MCF 10A (cell line): ENCODE measurements at regions of chr1 and their contacts with region 1.

Region 1: GRCh38 chr1:217660353-217661062 is 29.4 kb downstream of the SPATA17 start:
- DNase-seq: peak; percentile 97
- H3K4me3 Mint-ChIP-seq: no peak overlapping the region
- H3K27ac Mint-ChIP-seq: peak overlapping the region; percentile 52
- H3K4me1 Mint-ChIP-seq: peaks cover 25% of the 10 kb centered on the region
- H3K27me3 Mint-ChIP-seq: no peaks in the 10 kb centered on the region
- CTCF ChIP-seq: peak; percentile 70

Region 2: DNA sequence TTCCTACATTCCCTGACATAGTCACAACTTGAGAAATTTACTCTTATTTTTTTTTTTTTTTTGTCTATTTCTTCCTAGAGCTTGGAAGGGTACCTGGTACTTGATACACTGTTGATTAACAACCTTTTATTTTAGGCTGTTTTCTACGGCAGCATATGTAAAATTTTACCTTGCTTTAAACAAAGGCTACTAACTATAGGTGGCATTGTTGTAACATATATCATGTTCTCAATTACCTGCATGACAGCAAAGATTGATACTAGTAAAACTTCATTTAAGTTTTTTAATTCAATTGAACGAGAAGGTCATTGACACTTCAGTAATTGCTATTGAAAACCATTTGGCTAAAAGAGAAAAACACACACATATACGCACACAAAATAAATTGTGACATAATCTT is 699.0 kb before region 1 on chr1:
- CTCF ChIA-PET with region 1: interaction called, 5 read pairs
- POLR2A ChIA-PET with region 1: no interaction called
- intact Hi-C with region 1: loop called (anchors 1 kb)
- DNase-seq: no peak
- H3K4me3 Mint-ChIP-seq: no peak overlapping the region
- H3K27ac Mint-ChIP-seq: no peak overlapping the region
- H3K4me1 Mint-ChIP-seq: no peaks in the 10 kb centered on the region
- H3K27me3 Mint-ChIP-seq: no peaks in the 10 kb centered on the region
- CTCF ChIP-seq: peak; percentile 5

Region 3: DNA sequence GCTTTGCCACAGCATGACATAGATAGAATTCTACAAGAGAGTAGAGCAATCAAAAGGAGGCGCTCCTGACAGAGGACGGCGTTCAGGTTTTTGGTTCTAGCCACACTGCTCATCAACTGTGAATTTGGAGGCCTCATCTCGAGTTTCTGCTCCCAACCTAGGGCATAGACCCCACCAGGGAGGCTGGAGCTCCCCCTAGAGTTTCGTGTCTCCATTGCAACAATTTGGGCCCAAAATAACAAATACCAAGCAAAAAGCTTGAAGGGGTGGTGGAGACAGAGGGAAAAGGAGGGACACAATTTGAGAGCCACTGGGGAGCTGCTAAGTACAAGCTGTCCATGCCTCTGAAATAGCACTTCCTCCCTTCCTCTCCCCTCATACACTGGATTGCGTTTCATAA is 326.6 kb before region 1 on chr1:
- CTCF ChIA-PET with region 1: interaction called, 3 read pairs
- POLR2A ChIA-PET with region 1: no interaction called
- intact Hi-C with region 1: loop called (anchors 2 kb)
- DNase-seq: peak; percentile 79
- H3K4me3 Mint-ChIP-seq: no peak overlapping the region
- H3K27ac Mint-ChIP-seq: no peak overlapping the region
- H3K4me1 Mint-ChIP-seq: no peaks in the 10 kb centered on the region
- H3K27me3 Mint-ChIP-seq: peaks cover 5% of the 10 kb centered on the region
- CTCF ChIP-seq: peak; percentile 91

Region 4: GRCh38 chr1:217453816-217454215 is 206.7 kb before region 1 on chr1:
- CTCF ChIA-PET with region 1: no interaction called
- POLR2A ChIA-PET with region 1: no interaction called
- intact Hi-C with region 1: loop called (anchors 1 kb)
- DNase-seq: no peak
- H3K4me3 Mint-ChIP-seq: no peak overlapping the region
- H3K27ac Mint-ChIP-seq: no peak overlapping the region
- H3K4me1 Mint-ChIP-seq: no peaks in the 10 kb centered on the region
- H3K27me3 Mint-ChIP-seq: no peaks in the 10 kb centered on the region
- CTCF ChIP-seq: no peak

Region 5: GRCh38 chr1:217734973-217735372 is 74.5 kb after region 1 on chr1:
- CTCF ChIA-PET with region 1: interaction called, 3 read pairs
- POLR2A ChIA-PET with region 1: no interaction called
- intact Hi-C with region 1: loop called (anchors 2 kb)
- DNase-seq: peak; percentile 68
- H3K4me3 Mint-ChIP-seq: no peak overlapping the region
- H3K27ac Mint-ChIP-seq: no peak overlapping the region
- H3K4me1 Mint-ChIP-seq: peaks cover 27% of the 10 kb centered on the region
- H3K27me3 Mint-ChIP-seq: no peaks in the 10 kb centered on the region
- CTCF ChIP-seq: no peak

Region 6: GRCh38 chr1:218101409-218101808 is 440.9 kb after region 1 on chr1:
- CTCF ChIA-PET with region 1: no interaction called
- POLR2A ChIA-PET with region 1: no interaction called
- intact Hi-C with region 1: no loop called
- DNase-seq: no peak
- H3K4me3 Mint-ChIP-seq: no peak overlapping the region
- H3K27ac Mint-ChIP-seq: no peak overlapping the region
- H3K4me1 Mint-ChIP-seq: no peaks in the 10 kb centered on the region
- H3K27me3 Mint-ChIP-seq: peaks cover 49% of the 10 kb centered on the region
- CTCF ChIP-seq: no peak

Region 7: GRCh38 chr1:218171285-218171893 is 510.9 kb after region 1 on chr1:
- CTCF ChIA-PET with region 1: interaction called, 4 read pairs
- POLR2A ChIA-PET with region 1: no interaction called
- intact Hi-C with region 1: loop called (anchors 2 kb)
- DNase-seq: peak; percentile 68
- H3K4me3 Mint-ChIP-seq: no peak overlapping the region
- H3K27ac Mint-ChIP-seq: no peak overlapping the region
- H3K4me1 Mint-ChIP-seq: peaks cover 4% of the 10 kb centered on the region
- H3K27me3 Mint-ChIP-seq: peaks cover 89% of the 10 kb centered on the region
- CTCF ChIP-seq: peak; percentile 95